ENCODE measurements at regions of chr4 and their contacts with region 1.

Region 1: DNA sequence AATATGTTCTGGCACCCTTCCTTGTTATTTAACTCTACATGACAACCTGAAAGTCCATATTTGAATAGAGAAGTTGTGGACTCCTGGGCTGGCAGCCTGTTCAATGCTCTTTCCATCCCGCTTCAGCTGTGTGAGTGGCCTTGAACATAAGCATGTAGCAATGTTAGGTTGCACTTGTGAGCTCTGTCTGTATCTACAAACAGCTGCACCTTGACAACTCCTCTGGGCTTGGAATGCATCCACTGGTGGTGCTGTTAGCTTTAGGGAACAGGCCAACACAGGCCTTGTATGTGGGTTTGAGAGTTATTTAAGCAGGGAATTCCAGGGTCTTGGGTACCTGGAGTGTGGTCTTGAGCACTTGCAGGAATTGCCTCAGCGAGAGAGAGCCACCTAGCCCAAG is 141.2 kb downstream of the DTHD1 start:
- DNase-seq: no peak
- ATAC-seq: no peak
- H3K4me3 ChIP-seq: no peak overlapping the region
- H3K4me3 Mint-ChIP-seq: no peak overlapping the region
- H3K27ac ChIP-seq: no peak overlapping the region
- H3K27ac Mint-ChIP-seq: no peak overlapping the region
- H3K4me1 ChIP-seq: no peaks in the 10 kb centered on the region
- H3K4me1 Mint-ChIP-seq: no peaks in the 10 kb centered on the region
- H3K27me3 ChIP-seq: peaks cover 0 to 19% of the 10 kb centered on the region in 2 experiments
- H3K27me3 Mint-ChIP-seq: peaks cover 33 to 34% of the 10 kb centered on the region in 2 donors

Region 2: GRCh38 chr4:36439556-36439955 is 16.9 kb after region 1 on chr4:
- CTCF ChIA-PET with region 1: no interaction called
- POLR2A ChIA-PET with region 1: no interaction called
- DNase-seq: no peak
- ATAC-seq: no peak
- H3K4me3 ChIP-seq: no peak overlapping the region
- H3K4me3 Mint-ChIP-seq: no peak overlapping the region
- H3K27ac ChIP-seq: no peak overlapping the region
- H3K27ac Mint-ChIP-seq: no peak overlapping the region
- H3K4me1 ChIP-seq: no peaks in the 10 kb centered on the region
- H3K4me1 Mint-ChIP-seq: no peaks in the 10 kb centered on the region
- H3K27me3 ChIP-seq: peaks cover 0 to 5% of the 10 kb centered on the region in 2 experiments
- H3K27me3 Mint-ChIP-seq: peaks cover 7 to 10% of the 10 kb centered on the region in 2 donors

Region 3: DNA sequence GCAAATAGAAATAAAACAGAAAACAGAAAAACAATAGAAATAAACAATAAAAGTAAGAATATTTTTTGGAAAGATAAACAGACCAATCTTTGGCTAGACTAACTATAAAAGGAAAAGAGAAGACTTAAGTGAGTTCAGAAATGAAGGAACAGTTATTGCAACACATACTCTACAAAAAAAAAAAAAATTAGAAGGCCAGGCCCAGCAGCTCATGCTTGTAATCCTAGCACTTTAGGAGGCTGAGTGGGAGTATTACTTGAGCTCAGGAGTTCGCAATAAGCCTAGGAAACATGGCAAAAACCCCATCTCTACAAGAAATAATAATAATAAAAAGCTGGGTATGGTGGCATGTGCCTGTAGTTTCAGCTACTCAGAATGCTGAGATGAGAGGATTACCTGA is 195.5 kb after region 1 on chr4:
- CTCF ChIA-PET with region 1: interaction called in 1 of 2 experiments, 10 read pairs
- POLR2A ChIA-PET with region 1: no interaction called
- DNase-seq: no peak
- ATAC-seq: no peak
- H3K4me3 ChIP-seq: no peak overlapping the region
- H3K4me3 Mint-ChIP-seq: no peak overlapping the region
- H3K27ac ChIP-seq: no peak overlapping the region
- H3K27ac Mint-ChIP-seq: no peak overlapping the region
- H3K4me1 ChIP-seq: no peaks in the 10 kb centered on the region
- H3K4me1 Mint-ChIP-seq: no peaks in the 10 kb centered on the region
- H3K27me3 ChIP-seq: no peaks in the 10 kb centered on the region
- H3K27me3 Mint-ChIP-seq: no peaks in the 10 kb centered on the region

Measured in T-cell (primary cell).